Ovary (tissue), 10 donors: ENCODE measurements at regions of chr11 and their contacts with region 1.

Region 1: DNA sequence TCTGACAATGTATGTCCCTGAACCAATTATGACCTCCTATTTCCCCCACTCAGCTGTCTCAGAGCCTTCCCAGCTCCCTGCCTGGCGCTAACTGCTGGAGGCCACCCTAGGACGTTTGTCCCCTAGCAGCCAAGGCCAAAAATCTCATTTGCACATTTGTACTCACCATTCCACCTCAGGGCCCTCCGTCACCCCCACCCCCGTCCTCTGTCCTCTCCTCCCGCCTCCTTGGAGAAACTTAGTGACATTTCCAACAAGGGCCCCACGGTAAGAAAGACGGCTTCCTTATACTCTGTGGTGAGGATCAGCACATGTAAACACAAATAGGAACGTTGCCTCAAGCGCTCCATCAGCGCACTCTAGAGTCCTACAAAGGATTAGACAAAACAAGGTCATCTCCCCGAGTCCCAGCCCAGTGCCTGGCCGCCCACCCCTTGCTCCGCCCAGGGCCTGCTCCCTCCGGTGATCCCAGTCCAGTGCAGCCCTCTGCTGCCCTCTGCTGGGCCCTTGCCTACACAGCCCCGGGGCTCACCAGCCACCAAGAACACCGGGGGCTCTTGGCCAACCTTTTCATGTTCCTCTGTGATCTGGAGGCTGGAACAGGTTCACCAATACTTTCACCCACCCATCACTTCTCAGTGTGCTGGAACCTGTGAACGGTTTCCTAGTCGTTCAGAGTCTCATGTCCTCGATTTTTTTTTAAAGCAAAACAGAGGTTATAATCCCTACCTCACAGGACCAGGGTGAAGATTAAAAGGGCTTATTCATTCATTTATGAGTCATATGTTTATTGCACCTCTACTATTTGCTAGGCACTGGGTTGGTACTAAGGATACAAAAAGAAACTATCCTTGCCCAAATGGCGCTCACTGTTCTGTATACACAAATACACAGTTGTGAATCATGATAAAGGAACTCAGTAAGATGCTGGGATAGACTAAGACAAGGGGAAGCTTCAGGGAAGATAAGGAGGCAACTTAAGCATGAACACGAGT is 15.3 kb upstream of the CTR9 start:
- DNase-seq: peak; percentile 96 to 98 (median 96)
- H3K4me3 ChIP-seq: no peak overlapping the region
- H3K27ac ChIP-seq: peak overlapping the region in 1 of 2 donors; percentile 55
- H3K4me1 ChIP-seq: peaks cover 2% of the 10 kb centered on the region
- H3K27me3 ChIP-seq: no peaks in the 10 kb centered on the region
- CTCF ChIP-seq: peak; percentile 98 to 99 (median 98)
- EP300 ChIP-seq: no peak
- POLR2A ChIP-seq: no peak

Region 2: GRCh38 chr11:10322830-10323792 is 412.7 kb before region 1 on chr11:
- intact Hi-C with region 1: loop called in 1 of 4 experiments (anchors 10 kb)
- DNase-seq: peak in 3 of 5 donors; percentile 46 to 64 (median 52)
- H3K4me3 ChIP-seq: no peak overlapping the region
- H3K27ac ChIP-seq: no peak overlapping the region
- H3K4me1 ChIP-seq: peaks cover 37% of the 10 kb centered on the region
- H3K27me3 ChIP-seq: no peaks in the 10 kb centered on the region
- CTCF ChIP-seq: peak; percentile 38 to 67 (median 56)
- EP300 ChIP-seq: no peak
- POLR2A ChIP-seq: no peak

Region 3: DNA sequence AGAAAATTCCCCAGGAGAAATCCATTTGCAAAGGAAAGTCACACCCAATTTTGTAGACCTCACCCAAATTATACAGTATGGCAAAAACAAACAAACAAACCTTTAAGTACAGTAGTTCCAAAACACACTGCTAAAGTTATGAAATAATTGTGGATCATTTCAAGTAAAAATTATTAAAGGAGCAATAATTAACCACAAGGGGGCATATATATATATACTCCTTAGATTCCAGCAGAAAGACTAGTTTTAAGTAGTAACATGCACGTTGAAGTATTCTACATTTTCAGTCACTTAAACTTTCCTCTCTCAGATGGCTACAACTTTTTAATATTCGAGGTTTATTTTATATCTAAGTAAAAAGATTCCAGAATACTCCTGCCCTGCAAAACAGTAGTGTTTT is 221.6 kb before region 1 on chr11:
- intact Hi-C with region 1: loop called in 1 of 4 experiments (anchors 10 kb)
- DNase-seq: no peak
- H3K4me3 ChIP-seq: no peak overlapping the region
- H3K27ac ChIP-seq: no peak overlapping the region
- H3K4me1 ChIP-seq: peaks cover 2% of the 10 kb centered on the region
- H3K27me3 ChIP-seq: no peaks in the 10 kb centered on the region
- CTCF ChIP-seq: peak in 2 of 3 donors; percentile 8 to 40
- EP300 ChIP-seq: no peak
- POLR2A ChIP-seq: no peak

Region 4: DNA sequence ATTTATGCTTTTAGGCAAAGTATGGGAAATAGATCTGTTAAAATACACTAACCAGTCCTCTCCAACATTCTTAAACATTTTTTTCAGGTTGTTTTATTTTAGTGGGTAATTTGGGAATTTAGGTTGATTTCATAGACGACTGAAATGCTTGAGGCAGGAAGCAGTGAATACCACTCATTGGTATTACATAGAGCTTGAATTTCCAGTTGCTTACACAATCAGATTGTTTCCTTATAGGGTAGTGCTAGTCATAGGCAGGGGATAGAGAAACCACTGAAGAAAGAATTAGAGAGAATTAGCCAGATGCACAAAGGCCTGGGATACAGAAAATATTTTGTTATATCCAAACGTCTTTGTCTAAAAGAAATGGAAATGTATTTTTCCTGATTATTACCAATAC is 143.4 kb before region 1 on chr11:
- intact Hi-C with region 1: no loop called
- DNase-seq: no peak
- H3K4me3 ChIP-seq: no peak overlapping the region
- H3K27ac ChIP-seq: no peak overlapping the region
- H3K4me1 ChIP-seq: no peaks in the 10 kb centered on the region
- H3K27me3 ChIP-seq: no peaks in the 10 kb centered on the region
- CTCF ChIP-seq: no peak
- EP300 ChIP-seq: no peak
- POLR2A ChIP-seq: no peak

Region 5: DNA sequence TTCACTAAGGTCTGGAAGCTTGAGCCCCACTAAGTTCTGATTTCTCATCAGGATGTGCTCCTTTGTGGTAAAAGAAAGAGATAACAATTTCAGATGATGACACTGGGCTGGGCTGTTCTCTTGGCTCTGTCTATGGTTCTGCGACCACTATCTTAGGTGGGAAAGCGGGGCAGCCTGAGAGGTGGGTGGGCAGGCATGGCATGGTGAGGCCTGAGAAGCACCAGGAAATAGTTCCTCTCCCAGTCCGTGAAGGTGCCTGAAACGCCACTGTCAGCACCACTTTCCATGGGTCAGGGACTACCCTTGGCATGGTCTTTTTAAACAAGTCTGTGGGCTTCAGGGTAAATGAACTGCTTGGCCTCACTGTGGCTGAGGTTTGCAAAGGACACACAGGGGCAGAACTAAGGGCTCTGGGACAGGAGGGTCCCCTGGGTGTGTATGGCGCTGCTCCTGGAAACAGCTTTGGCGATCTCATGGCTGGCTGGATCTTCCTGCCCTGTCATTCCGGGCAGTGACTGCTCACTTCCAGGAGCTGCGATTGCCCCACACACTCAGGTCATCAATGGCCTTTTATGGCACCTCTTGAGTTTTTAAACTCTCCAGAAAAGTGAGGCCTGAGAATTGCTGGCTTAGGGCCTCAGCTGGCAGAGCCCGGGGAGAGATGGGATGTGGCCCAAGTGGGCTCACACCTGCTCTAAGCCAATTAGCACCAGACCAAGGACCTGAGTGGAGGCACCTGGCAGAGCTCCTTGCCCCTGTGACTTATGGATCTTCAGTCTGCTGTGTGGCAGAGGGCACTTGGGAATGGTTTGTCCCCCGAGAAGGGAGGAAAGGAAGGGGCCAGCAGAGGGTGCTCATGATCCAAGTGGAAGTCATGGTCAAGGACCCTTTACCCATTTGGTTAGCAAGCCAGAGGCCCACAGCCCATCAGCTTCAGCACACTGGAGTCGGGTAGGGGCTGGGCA is 111.7 kb before region 1 on chr11:
- intact Hi-C with region 1: loop called in 1 of 4 experiments (anchors 10 kb)
- DNase-seq: peak; percentile 30 to 56 (median 52)
- H3K4me3 ChIP-seq: no peak overlapping the region
- H3K27ac ChIP-seq: no peak overlapping the region
- H3K4me1 ChIP-seq: peaks cover 3% of the 10 kb centered on the region
- H3K27me3 ChIP-seq: no peaks in the 10 kb centered on the region
- CTCF ChIP-seq: peak in 1 of 3 donors; percentile 23
- EP300 ChIP-seq: peak; percentile 30
- POLR2A ChIP-seq: no peak

Region 6: DNA sequence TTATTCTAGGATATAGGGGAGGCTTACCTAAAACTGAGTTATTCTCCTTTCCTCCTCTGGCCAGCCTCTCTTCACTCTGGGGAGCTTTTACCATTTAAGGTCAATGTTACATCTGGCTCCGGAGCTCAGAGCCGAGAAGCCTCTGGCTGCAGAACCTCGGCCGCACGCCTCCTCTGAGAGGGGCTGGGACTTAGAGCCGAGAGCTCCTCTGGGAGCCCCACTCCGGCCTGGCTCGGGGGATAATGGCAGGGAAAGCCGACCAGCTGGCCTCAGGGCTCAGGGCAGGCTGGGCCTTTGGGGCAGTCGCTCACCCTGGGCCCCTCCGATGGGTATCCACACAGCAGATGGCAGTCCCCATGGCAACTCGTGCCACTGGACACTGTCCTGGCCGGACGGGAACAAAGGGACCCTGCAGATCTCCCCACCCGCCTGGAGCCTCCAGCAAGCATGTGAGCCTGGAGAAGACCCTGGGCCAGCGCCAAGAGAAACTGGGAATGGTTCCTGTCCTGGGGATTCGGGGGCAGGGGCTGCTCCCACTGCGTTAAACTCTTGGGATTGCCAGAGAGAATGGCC is 42.2 kb before region 1 on chr11 and contains the start of gene IRAG1:
- intact Hi-C with region 1: loop called in 1 of 4 experiments (anchors 5 kb)
- DNase-seq: peak; percentile 64 to 79 (median 70)
- H3K4me3 ChIP-seq: peak within 1 kb of the TSS; percentile 52
- H3K27ac ChIP-seq: peak within 1 kb of the TSS; percentile 73
- H3K4me1 ChIP-seq: peaks cover 5% of the 10 kb centered on the region
- H3K27me3 ChIP-seq: no peaks in the 10 kb centered on the region
- CTCF ChIP-seq: no peak
- EP300 ChIP-seq: no peak
- POLR2A ChIP-seq: no peak
- total RNA-seq, gene IRAG1: 5.8 to 89.5 (median 29.8) TPM